ENCODE measurements at regions of chr10 and their contacts with region 1.

Region 1: DNA sequence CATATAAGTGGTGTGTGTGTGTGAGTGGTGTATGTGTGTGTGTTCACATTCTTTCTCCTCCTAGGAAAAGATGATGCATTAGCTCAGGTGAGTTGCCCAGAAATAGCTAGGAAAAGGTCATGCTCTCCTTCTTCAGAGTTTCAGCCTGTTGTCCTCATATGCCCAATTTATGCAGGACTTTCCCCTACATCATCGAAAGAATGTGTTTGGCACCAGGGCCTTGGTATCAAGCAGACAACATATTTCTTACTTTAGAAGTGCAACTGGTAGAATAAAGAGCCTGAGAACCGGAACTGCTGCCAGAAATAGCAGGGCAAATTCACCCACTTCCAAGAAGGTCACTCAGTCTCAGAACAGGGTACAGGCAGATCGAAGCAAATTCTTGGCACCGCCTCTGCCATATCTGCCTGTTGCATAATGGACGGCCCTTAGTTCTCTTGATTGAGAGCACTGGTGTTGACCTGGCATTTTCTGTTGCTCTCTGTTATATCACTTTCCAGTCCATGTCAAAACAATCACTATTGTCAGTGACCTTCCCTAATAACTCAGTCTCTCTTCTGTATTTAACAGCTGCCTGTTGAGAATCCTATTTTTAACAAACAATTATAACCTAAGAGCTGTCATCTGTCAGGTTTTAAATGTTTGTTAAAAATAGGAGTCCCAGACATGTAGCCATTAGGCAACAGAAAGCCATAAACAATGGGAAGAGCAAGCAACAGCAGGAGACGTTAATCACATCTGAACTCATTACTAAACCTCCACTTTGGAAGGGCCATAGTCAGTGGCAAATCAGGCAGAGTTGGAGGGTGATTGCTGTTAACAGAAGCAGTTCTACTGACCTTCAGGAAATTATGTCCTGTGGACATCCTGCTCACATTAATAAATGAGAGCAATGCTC is 20.7 kb downstream of the ADRB1 start:
- DNase-seq: no peak

Region 2: GRCh38 chr10:113854011-113854760 is 210.2 kb before region 1 on chr10 and contains the starts of genes DCLRE1A and NHLRC2:
- intact Hi-C with region 1: loop called (anchors 5 kb)
- DNase-seq: peak; percentile 90
- total RNA-seq, gene DCLRE1A: 5.4 TPM
- total RNA-seq, gene NHLRC2: 58.4 TPM

Measured in cardiac septum (tissue), 1 donor.